B cell (primary cell): ENCODE measurements at regions of chr2 and their contacts with region 1.

Region 1: DNA sequence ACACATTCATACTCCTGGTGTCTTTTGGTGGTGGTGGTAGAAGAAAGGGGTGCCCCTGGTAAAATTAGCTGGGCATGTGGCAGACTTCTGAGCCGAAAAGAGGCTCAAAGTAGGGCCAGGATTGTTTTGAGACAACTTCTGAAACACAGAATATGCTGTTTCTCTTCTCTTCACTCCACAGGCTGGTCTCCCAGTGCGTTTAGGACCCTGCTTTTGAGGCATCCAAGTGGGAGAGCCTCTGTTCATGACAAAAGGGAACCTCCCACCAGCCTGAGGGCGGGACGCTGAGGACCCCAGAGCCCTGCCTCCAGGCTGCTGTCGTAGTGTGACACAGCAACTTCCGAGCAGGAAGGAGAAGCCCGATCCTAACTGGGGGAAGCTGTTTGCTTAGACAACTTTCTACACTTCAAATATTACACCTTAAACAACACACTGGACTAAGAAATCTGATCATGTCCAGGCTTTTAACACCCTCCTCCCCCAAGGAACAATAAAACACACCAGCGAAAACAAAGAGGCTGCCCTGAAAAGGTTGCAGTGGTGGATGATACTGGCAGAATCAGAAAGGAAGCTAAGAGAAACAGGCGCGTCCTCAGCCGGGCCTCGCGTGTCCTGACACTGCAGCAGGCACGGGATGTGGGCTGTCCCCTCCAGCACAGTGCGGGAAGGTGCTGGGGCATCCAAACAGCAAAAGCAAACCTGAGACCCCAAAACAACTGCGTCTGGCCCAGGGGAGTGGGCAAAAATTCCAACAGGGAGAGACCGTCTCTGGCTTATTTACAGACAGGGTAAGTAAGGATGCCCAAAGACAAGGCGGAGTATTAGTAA is 9.3 kb downstream of the SERTAD2 start:
- DNase-seq: peak; percentile 74
- ATAC-seq: peak; percentile 37
- H3K4me3 ChIP-seq: peak overlapping the region; percentile 21 to 50 (median 29)
- H3K4me3 Mint-ChIP-seq: peak overlapping the region; percentile 89
- H3K27ac ChIP-seq: peak overlapping the region; percentile 66 to 81
- H3K27ac Mint-ChIP-seq: peak overlapping the region; percentile 97
- H3K4me1 ChIP-seq: peaks cover 78 to 88% of the 10 kb centered on the region in 2 donors
- H3K4me1 Mint-ChIP-seq: peaks cover 89% of the 10 kb centered on the region
- H3K27me3 ChIP-seq: no peaks in the 10 kb centered on the region
- H3K27me3 Mint-ChIP-seq: no peaks in the 10 kb centered on the region
- CTCF ChIP-seq: no peak

Region 2: GRCh38 chr2:64548761-64549160 is 95.6 kb before region 1 on chr2:
- CTCF ChIA-PET with region 1: no interaction called
- POLR2A ChIA-PET with region 1: no interaction called
- intact Hi-C with region 1: no loop called
- DNase-seq: no peak
- ATAC-seq: no peak
- H3K4me3 ChIP-seq: no peak overlapping the region
- H3K4me3 Mint-ChIP-seq: no peak overlapping the region
- H3K27ac ChIP-seq: peak overlapping the region in 1 of 2 donors; percentile 28
- H3K27ac Mint-ChIP-seq: no peak overlapping the region
- H3K4me1 ChIP-seq: peaks cover 3 to 5% of the 10 kb centered on the region in 2 donors
- H3K4me1 Mint-ChIP-seq: peaks cover 41% of the 10 kb centered on the region
- H3K27me3 ChIP-seq: no peaks in the 10 kb centered on the region
- H3K27me3 Mint-ChIP-seq: no peaks in the 10 kb centered on the region
- CTCF ChIP-seq: no peak

Region 3: DNA sequence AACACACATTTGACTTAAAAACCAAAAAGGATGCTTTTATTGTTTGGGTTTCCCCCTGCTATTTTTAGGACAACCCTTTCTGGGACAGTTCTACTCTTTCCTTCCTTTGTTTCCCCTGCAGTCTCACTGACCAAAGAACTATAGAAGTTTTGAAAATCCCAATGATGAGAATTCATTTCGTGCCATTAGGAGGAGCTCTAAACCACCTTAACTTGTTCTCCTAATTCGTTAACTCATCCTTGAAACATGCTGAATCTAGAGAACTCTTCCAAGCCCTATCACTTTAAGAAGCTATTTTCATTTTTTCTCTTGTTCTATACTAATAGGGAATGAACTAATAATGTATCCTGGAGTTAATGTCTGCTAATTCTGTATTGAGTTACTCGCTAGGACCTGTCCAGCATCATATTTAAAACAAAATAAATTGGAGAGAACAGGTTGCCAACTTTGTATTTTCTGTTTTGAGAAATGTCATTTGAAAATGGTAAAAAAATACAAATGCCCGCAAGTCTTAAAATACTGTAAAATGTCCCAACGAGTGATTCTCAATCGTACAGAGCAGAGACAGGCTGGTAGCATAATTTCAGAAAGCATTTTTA is 57.4 kb before region 1 on chr2:
- CTCF ChIA-PET with region 1: interaction called, 45 read pairs
- POLR2A ChIA-PET with region 1: interaction called, 3 read pairs
- intact Hi-C with region 1: loop called (anchors 1 kb)
- DNase-seq: peak; percentile 72
- ATAC-seq: peak; percentile 58
- H3K4me3 ChIP-seq: no peak overlapping the region
- H3K4me3 Mint-ChIP-seq: no peak overlapping the region
- H3K27ac ChIP-seq: no peak overlapping the region
- H3K27ac Mint-ChIP-seq: peak overlapping the region; percentile 32
- H3K4me1 ChIP-seq: peaks cover 0 to 4% of the 10 kb centered on the region in 2 donors
- H3K4me1 Mint-ChIP-seq: peaks cover 14% of the 10 kb centered on the region
- H3K27me3 ChIP-seq: no peaks in the 10 kb centered on the region
- H3K27me3 Mint-ChIP-seq: no peaks in the 10 kb centered on the region
- CTCF ChIP-seq: peak; percentile 88

Region 4: GRCh38 chr2:64661741-64662169 is 17.4 kb after region 1 on chr2:
- CTCF ChIA-PET with region 1: interaction called, 68 read pairs
- POLR2A ChIA-PET with region 1: interaction called, 4 read pairs
- intact Hi-C with region 1: loop called (anchors 2 kb)
- DNase-seq: peak; percentile 67
- ATAC-seq: peak; percentile 46
- H3K4me3 ChIP-seq: peak overlapping the region in 3 of 5 experiments; percentile 7 to 21 (median 10)
- H3K4me3 Mint-ChIP-seq: peak overlapping the region; percentile 58
- H3K27ac ChIP-seq: peak overlapping the region; percentile 37 to 62
- H3K27ac Mint-ChIP-seq: peak overlapping the region; percentile 81
- H3K4me1 ChIP-seq: peaks cover 76 to 82% of the 10 kb centered on the region in 2 donors
- H3K4me1 Mint-ChIP-seq: peaks cover 69% of the 10 kb centered on the region
- H3K27me3 ChIP-seq: no peaks in the 10 kb centered on the region
- H3K27me3 Mint-ChIP-seq: no peaks in the 10 kb centered on the region
- CTCF ChIP-seq: peak; percentile 37

Region 5: GRCh38 chr2:64742678-64743077 is 98.3 kb after region 1 on chr2:
- CTCF ChIA-PET with region 1: interaction called, 121 read pairs
- POLR2A ChIA-PET with region 1: no interaction called
- intact Hi-C with region 1: no loop called
- DNase-seq: no peak
- ATAC-seq: no peak
- H3K4me3 ChIP-seq: no peak overlapping the region
- H3K4me3 Mint-ChIP-seq: no peak overlapping the region
- H3K27ac ChIP-seq: no peak overlapping the region
- H3K27ac Mint-ChIP-seq: no peak overlapping the region
- H3K4me1 ChIP-seq: no peaks in the 10 kb centered on the region
- H3K4me1 Mint-ChIP-seq: peaks cover 7% of the 10 kb centered on the region
- H3K27me3 ChIP-seq: no peaks in the 10 kb centered on the region
- H3K27me3 Mint-ChIP-seq: no peaks in the 10 kb centered on the region
- CTCF ChIP-seq: no peak

Region 6: DNA sequence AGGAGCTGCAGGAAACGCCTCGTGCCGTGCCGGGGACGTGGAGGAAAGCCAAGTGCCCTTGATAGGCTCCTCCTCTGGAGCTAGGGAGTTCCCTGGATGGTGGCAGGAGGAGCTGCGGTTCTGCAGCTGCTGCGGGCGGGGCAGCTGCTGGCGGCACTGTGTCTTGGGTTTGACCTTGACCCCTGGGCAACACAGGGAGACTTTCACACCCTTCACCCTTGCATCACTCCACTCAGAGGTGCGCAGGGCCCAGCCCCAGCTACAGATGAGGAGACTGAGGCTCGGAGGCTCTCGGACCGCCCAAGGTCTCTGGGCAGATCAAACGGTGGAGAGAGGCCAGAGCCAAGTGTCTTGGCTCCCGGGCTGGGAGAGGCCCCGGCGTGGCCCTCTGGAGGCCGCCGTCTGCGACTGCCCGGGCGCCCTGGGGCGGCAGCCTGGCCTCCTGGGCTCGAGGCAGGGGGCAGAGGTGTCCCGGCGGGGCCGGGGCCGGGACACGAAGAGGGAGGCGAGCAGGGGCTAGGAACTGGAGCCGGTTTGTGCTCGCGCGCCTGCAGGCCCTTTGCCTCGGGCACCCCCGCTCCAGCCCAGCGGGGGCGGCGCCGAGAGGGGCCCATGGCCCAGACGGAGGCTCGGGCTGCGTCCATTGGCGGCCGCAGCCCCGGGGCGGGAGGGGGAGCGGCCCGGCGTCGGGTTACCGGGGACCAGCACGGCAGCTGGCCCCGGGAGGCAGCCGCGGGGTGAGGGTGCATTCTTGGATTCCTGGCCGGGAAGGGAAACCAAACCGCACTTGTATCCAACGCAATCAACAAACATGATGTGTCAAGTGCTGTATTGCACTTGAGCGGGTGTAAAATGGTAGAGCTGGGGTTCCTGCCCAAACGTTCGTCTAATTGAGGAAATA is 215.2 kb after region 1 on chr2:
- CTCF ChIA-PET with region 1: interaction called, 138 read pairs
- POLR2A ChIA-PET with region 1: interaction called, 14 read pairs
- intact Hi-C with region 1: no loop called
- DNase-seq: peak; percentile 69
- ATAC-seq: peak; percentile 11
- H3K4me3 ChIP-seq: peak overlapping the region; percentile 61 to 79 (median 67)
- H3K4me3 Mint-ChIP-seq: peak overlapping the region; percentile 79
- H3K27ac ChIP-seq: peak overlapping the region; percentile 91 to 93
- H3K27ac Mint-ChIP-seq: no peak overlapping the region
- H3K4me1 ChIP-seq: peaks cover 76 to 80% of the 10 kb centered on the region in 2 donors
- H3K4me1 Mint-ChIP-seq: peaks cover 28% of the 10 kb centered on the region
- H3K27me3 ChIP-seq: no peaks in the 10 kb centered on the region
- H3K27me3 Mint-ChIP-seq: no peaks in the 10 kb centered on the region
- CTCF ChIP-seq: no peak

Region 7: DNA sequence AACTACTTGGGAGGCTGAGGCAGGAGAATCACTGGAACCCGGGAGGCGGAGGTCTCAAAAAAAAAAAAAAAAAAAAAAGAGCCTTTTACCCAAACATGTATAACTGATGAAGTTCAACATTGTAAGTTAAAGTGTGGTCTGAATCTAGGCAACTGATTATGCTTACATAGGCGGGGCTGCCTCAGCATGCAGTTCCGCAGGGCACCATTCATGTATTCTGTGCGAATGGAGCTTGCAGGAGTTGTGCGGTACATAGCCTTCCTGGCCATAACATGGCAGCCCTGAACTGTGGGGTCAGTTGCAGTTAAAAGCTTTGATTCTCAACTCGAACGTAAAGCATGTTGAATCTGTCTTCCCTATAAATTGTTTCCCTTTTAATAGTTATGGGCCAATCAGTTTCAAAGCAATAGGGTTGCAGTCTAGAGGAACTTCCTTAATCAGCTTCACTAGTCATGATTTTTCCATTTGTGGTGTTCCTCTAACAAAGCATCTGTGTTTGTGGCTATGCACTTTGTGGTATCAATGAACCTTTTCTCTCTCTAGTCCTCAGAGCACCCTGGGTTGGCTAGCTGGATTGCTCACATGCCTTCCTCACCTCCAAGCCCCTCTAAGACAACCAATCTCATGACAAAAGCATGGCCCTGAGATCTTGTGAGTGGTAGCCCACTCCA is 381.2 kb after region 1 on chr2:
- CTCF ChIA-PET with region 1: interaction called, 4 read pairs
- POLR2A ChIA-PET with region 1: no interaction called
- intact Hi-C with region 1: loop called (anchors 5 kb)
- DNase-seq: peak; percentile 66
- ATAC-seq: peak; percentile 31
- H3K4me3 ChIP-seq: peak overlapping the region in 1 of 5 experiments; percentile 24
- H3K4me3 Mint-ChIP-seq: peak overlapping the region; percentile 72
- H3K27ac ChIP-seq: peak overlapping the region; percentile 75 to 86
- H3K27ac Mint-ChIP-seq: peak overlapping the region; percentile 90
- H3K4me1 ChIP-seq: peaks cover 55 to 69% of the 10 kb centered on the region in 2 donors
- H3K4me1 Mint-ChIP-seq: peaks cover 56% of the 10 kb centered on the region
- H3K27me3 ChIP-seq: no peaks in the 10 kb centered on the region
- H3K27me3 Mint-ChIP-seq: no peaks in the 10 kb centered on the region
- CTCF ChIP-seq: no peak

Region 8: GRCh38 chr2:66547887-66548286 is 1903.5 kb after region 1 on chr2:
- CTCF ChIA-PET with region 1: no interaction called
- POLR2A ChIA-PET with region 1: no interaction called
- intact Hi-C with region 1: no loop called
- DNase-seq: no peak
- ATAC-seq: no peak
- H3K4me3 ChIP-seq: no peak overlapping the region
- H3K4me3 Mint-ChIP-seq: no peak overlapping the region
- H3K27ac ChIP-seq: no peak overlapping the region
- H3K27ac Mint-ChIP-seq: no peak overlapping the region
- H3K4me1 ChIP-seq: no peaks in the 10 kb centered on the region
- H3K4me1 Mint-ChIP-seq: no peaks in the 10 kb centered on the region
- H3K27me3 ChIP-seq: no peaks in the 10 kb centered on the region
- H3K27me3 Mint-ChIP-seq: peaks cover 16% of the 10 kb centered on the region
- CTCF ChIP-seq: no peak